ENCODE measurements at regions of chr5 and their contacts with region 1.

Region 1: DNA sequence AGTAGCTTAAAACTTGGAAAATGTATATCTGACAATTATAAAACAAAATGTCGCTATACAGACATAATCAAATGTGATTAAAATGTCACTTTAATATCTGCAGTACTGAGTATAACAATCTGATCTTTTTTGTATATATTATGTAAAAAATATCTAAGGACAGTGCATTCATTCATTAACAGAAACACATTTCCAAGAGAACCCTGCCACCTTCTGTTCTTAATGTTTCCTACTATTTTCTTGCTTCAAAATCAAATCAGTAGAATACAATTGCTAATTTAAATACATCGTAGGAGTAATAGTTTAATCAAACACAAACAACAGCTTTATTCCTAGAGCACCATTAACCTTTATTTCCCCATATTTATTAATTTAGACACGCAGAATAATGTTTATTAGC is 142.6 kb upstream of the ST8SIA4 start:
- DNase-seq: no peak
- ATAC-seq: no peak
- H3K4me3 Mint-ChIP-seq: no peak overlapping the region
- H3K27ac Mint-ChIP-seq: no peak overlapping the region
- H3K4me1 Mint-ChIP-seq: peaks cover 7% of the 10 kb centered on the region
- H3K27me3 Mint-ChIP-seq: no peaks in the 10 kb centered on the region
- CTCF ChIP-seq: peak; percentile 39

Region 2: GRCh38 chr5:100623719-100624118 is 422.0 kb before region 1 on chr5:
- CTCF ChIA-PET with region 1: no interaction called
- POLR2A ChIA-PET with region 1: no interaction called
- intact Hi-C with region 1: loop called (anchors 10 kb)
- DNase-seq: no peak
- ATAC-seq: peak; percentile 49
- H3K4me3 Mint-ChIP-seq: no peak overlapping the region
- H3K27ac Mint-ChIP-seq: no peak overlapping the region
- H3K4me1 Mint-ChIP-seq: no peaks in the 10 kb centered on the region
- H3K27me3 Mint-ChIP-seq: no peaks in the 10 kb centered on the region
- CTCF ChIP-seq: peak; percentile 53